Activated B cell treated with CpG ODN at 0.5 μM for 24 hours (primary cell): ENCODE measurements at regions of chr4 and their contacts with region 1.

Region 1: DNA sequence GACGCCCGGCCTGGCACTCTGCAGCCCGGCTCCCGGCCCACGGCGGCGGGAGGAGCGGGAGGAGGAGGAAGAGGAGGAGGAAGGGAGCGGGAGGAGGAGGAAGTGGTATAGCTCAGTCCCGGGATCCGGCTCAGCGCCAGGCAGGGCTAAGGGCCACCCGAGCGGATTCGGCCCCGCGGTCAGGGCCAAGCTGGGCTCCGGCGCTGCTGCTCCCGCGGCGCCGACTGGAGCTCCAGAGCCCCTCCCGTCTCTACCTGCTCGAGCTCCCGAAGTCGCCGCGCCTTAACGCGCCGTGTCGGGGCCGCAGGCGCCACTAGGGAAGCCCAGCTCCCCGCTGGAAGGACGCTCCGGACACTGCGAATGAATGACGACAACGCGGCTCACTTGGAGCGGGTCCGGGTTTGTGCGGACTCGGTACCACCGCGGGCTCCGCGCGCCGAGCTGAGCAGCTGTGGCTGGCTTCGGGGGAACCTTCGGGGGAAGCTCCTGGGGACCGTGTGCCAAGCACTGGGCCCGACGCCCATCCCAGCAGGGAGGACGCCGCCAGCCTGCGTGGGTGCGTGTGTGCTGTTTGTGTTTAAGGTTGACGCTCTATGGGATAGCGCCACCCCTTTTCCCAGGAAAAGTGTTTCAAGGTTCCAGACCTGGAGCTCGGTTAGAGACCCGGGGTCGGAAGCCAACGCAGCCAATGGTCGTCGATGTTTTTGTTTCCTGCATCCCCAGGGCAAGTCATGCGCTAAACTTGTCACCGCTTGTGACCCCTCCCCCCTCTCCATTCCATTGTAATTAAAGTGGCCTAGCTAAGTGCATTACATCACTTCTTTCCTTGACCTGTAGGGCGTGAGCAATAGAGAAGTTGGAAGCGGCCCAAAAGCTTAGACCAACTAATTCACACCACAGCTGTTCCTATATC is at the start of gene TBC1D9:
- DNase-seq: peak; percentile 70
- ATAC-seq: peak; percentile 48
- H3K4me3 Mint-ChIP-seq: peak within 1 kb of the TSS; percentile 89
- H3K27ac Mint-ChIP-seq: peak within 1 kb of the TSS; percentile 94
- H3K4me1 Mint-ChIP-seq: peaks cover 62% of the 10 kb centered on the region
- H3K27me3 Mint-ChIP-seq: no peaks in the 10 kb centered on the region
- CTCF ChIP-seq: no peak
- total RNA-seq, gene TBC1D9: 37.9 and 46.0 TPM in 2 replicates

Region 2: DNA sequence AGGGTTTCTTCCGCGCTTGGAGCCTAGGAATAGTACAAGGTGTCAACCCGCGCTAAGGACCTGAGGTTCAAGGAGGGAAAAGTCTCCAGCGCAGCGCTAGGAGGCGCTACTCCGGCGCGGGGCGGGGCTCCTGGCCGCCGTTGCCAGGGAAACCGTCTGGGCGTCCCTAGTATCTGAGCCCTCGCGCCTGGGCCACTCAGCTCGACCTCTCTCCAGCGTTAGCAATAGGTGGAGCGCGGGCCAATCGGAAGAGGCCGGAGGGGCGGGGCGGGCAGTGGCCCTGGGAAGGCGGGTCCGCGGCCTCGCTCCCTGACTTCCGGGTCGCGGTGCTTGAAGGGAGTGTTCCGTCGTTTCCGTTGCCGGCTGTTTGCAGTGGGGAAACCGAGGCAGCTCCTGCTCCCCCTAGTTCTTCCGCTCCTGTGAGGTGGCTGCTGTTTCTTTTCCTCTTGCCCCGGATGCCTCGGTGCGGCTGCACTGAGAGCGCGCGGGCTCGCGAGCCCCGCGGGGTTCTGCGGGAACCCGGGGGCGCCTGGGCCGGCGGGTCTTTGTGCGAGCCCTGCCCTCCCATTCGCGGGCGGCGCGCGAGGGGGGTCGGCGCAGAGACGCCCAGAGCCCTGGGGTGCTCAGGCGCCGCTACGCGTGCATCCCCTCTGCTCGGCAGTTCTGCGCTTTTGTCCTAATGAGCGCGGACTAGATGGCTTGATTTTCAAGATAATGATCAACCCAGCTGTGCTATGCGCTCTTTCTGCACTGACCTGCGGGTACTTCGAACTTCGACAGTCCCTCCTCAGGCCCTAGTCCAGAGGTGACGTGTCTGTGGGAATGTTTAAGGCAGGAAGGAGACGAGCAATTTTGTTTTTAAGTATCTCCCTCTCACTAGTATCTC is 232.5 kb before region 1 on chr4 and contains the start of gene ELMOD2:
- CTCF ChIA-PET with region 1: interaction called, 3 read pairs
- POLR2A ChIA-PET with region 1: no interaction called
- intact Hi-C with region 1: loop called (anchors 2 kb)
- DNase-seq: peak; percentile 94
- ATAC-seq: peak; percentile 99
- H3K4me3 Mint-ChIP-seq: peak within 1 kb of the TSS; percentile 90
- H3K27ac Mint-ChIP-seq: peak within 1 kb of the TSS; percentile 84
- H3K4me1 Mint-ChIP-seq: peaks cover 14% of the 10 kb centered on the region
- H3K27me3 Mint-ChIP-seq: no peaks in the 10 kb centered on the region
- CTCF ChIP-seq: peak; percentile 72
- total RNA-seq, gene ELMOD2: 20.4 and 20.8 TPM in 2 replicates

Region 3: GRCh38 chr4:140720387-140721304 is 35.9 kb before region 1 on chr4:
- CTCF ChIA-PET with region 1: interaction called, 7 read pairs
- POLR2A ChIA-PET with region 1: interaction called, 64 read pairs
- intact Hi-C with region 1: loop called (anchors 1 kb)
- DNase-seq: peak; percentile 40
- ATAC-seq: peak; percentile 56
- H3K4me3 Mint-ChIP-seq: peak overlapping the region; percentile 84
- H3K27ac Mint-ChIP-seq: peak overlapping the region; percentile 98
- H3K4me1 Mint-ChIP-seq: peaks cover 89% of the 10 kb centered on the region
- H3K27me3 Mint-ChIP-seq: no peaks in the 10 kb centered on the region
- CTCF ChIP-seq: no peak

Region 4: DNA sequence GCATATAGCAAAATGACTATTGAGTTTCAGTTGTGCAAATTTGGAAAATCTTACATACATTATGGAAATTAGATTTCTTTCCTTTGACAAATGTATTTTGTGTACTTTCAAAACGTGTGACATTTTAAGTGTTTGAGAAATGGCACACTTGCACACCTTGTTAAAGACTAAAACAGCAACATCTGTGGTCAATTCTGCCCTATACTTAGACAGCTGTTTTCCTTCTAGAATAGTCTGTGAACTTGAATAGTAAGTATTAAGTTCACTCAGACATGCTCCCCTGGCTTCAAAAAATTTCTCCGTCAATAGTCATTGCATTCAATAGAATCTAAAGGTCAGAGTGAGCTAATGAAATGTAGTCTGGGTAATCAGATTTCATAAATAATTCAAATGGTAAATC is 21.3 kb after region 1 on chr4:
- CTCF ChIA-PET with region 1: interaction called, 5 read pairs
- POLR2A ChIA-PET with region 1: interaction called, 7 read pairs
- intact Hi-C with region 1: loop called (anchors 1 kb)
- DNase-seq: no peak
- ATAC-seq: no peak
- H3K4me3 Mint-ChIP-seq: no peak overlapping the region
- H3K27ac Mint-ChIP-seq: no peak overlapping the region
- H3K4me1 Mint-ChIP-seq: peaks cover 30% of the 10 kb centered on the region
- H3K27me3 Mint-ChIP-seq: no peaks in the 10 kb centered on the region
- CTCF ChIP-seq: no peak

Region 5: DNA sequence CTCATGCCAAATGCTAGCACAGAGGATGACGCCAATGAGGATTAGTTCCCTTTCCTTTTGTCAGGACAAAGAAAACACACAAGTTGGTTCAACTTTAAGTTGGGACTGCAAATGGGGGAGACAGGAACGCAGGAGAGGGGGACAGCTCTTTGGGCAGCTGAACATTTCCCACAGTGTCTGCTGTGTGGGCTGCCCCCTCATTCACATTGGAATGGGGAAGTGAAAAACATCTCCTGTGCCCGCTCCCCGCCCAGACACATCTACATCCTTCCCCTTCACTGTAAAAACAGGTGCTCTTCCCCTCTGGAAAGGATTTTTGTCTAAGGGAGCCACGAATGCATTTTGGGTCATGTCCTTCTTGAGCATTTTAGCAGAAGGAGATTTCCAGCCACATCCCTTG is 44.1 kb after region 1 on chr4:
- CTCF ChIA-PET with region 1: interaction called, 6 read pairs
- POLR2A ChIA-PET with region 1: interaction called, 75 read pairs
- intact Hi-C with region 1: no loop called
- DNase-seq: no peak
- ATAC-seq: peak; percentile 70
- H3K4me3 Mint-ChIP-seq: peak overlapping the region; percentile 56
- H3K27ac Mint-ChIP-seq: peak overlapping the region; percentile 79
- H3K4me1 Mint-ChIP-seq: peaks cover 87% of the 10 kb centered on the region
- H3K27me3 Mint-ChIP-seq: no peaks in the 10 kb centered on the region
- CTCF ChIP-seq: no peak